ENCODE measurements at regions of chr14 and their contacts with region 1.

Region 1: GRCh38 chr14:102591889-102592763 is at the start of gene RCOR1:
- DNase-seq: peak; percentile 95
- H3K4me3 Mint-ChIP-seq: peak within 1 kb of the TSS; percentile 94
- H3K27ac Mint-ChIP-seq: peak within 1 kb of the TSS; percentile 96
- H3K4me1 Mint-ChIP-seq: peaks cover 18% of the 10 kb centered on the region
- H3K27me3 Mint-ChIP-seq: no peaks in the 10 kb centered on the region
- total RNA-seq, gene RCOR1: 23.9 and 25.2 TPM in 2 replicates

Region 2: GRCh38 chr14:101947906-101948665 is 644.0 kb before region 1 on chr14:
- intact Hi-C with region 1: loop called (anchors 2 kb)
- DNase-seq: peak; percentile 100
- H3K4me3 Mint-ChIP-seq: peak overlapping the region; percentile 97
- H3K27ac Mint-ChIP-seq: peak overlapping the region; percentile 97
- H3K4me1 Mint-ChIP-seq: peaks cover 12% of the 10 kb centered on the region
- H3K27me3 Mint-ChIP-seq: peaks cover 15% of the 10 kb centered on the region

Region 3: DNA sequence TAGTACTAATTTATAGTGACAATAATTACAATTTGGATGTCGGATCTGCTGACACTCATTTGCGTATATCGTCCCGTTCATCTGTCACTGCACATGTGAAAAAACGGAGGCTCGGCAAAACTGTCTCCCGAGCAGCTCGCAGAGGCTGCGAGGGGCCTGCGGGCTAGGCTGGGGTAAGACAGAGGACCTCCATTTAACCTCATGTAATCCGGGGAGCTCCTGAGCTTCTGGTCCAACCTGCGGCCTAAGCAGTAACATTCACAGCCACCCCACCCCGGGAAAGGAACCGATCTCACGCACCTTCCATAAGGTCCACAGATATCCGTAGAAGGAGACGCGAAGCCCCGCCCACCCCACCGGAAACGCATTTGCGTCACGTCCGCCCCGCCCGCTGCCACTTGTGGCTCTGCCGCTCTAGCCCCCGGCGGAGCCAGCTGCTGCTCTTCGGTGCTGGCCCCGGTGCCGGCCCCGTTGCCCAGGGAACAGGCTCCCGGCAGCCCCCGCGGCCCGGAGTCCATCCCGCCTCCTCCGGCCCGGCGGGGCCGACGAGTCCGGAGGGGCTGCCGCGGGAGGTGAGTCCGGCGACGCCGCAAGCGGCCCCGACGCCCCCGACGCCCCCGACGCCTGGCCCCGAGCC is 229.5 kb before region 1 on chr14 and contains the starts of genes CINP and TECPR2:
- intact Hi-C with region 1: loop called (anchors 2 kb)
- DNase-seq: peak; percentile 92
- H3K4me3 Mint-ChIP-seq: peak within 1 kb of the TSS; percentile 93
- H3K27ac Mint-ChIP-seq: peak within 1 kb of the TSS; percentile 91
- H3K4me1 Mint-ChIP-seq: peaks cover 32% of the 10 kb centered on the region
- H3K27me3 Mint-ChIP-seq: no peaks in the 10 kb centered on the region
- total RNA-seq, gene CINP: 39.6 and 42.5 TPM in 2 replicates
- total RNA-seq, gene TECPR2: 9.5 and 10.1 TPM in 2 replicates

Region 4: GRCh38 chr14:102524466-102525218 is 67.5 kb before region 1 on chr14:
- intact Hi-C with region 1: loop called (anchors 1 kb)
- DNase-seq: peak; percentile 94
- H3K4me3 Mint-ChIP-seq: peak overlapping the region; percentile 92
- H3K27ac Mint-ChIP-seq: peak overlapping the region; percentile 88
- H3K4me1 Mint-ChIP-seq: peaks cover 27% of the 10 kb centered on the region
- H3K27me3 Mint-ChIP-seq: peaks cover 7% of the 10 kb centered on the region

Region 5: DNA sequence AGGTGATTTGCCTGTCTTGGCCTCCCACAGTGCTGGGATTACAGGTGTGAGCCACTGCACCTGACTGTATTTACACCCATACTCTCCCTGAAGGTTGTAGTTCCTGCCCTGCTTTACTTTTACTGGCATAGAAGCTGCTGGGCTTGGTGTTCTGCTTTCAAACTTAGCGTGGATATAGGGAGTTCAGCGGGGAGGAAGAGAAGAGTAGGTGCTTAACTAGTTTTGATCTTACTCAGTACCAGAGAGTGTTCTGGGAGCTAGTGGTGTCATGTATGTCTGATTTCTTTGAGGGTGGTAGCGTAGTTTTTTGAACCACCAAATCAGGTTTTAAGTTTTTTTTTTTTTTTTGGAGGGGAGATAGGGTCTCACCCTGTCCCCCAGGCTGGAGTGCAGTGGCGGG is 14.2 kb after region 1 on chr14:
- intact Hi-C with region 1: loop called (anchors 2 kb)
- DNase-seq: no peak
- H3K4me3 Mint-ChIP-seq: no peak overlapping the region
- H3K27ac Mint-ChIP-seq: peak overlapping the region; percentile 31
- H3K4me1 Mint-ChIP-seq: peaks cover 31% of the 10 kb centered on the region
- H3K27me3 Mint-ChIP-seq: no peaks in the 10 kb centered on the region

Region 6: GRCh38 chr14:102900631-102901571 is 308.8 kb after region 1 on chr14:
- intact Hi-C with region 1: no loop called
- DNase-seq: no peak
- H3K4me3 Mint-ChIP-seq: no peak overlapping the region
- H3K27ac Mint-ChIP-seq: peak overlapping the region; percentile 72
- H3K4me1 Mint-ChIP-seq: peaks cover 23% of the 10 kb centered on the region
- H3K27me3 Mint-ChIP-seq: no peaks in the 10 kb centered on the region

Region 7: DNA sequence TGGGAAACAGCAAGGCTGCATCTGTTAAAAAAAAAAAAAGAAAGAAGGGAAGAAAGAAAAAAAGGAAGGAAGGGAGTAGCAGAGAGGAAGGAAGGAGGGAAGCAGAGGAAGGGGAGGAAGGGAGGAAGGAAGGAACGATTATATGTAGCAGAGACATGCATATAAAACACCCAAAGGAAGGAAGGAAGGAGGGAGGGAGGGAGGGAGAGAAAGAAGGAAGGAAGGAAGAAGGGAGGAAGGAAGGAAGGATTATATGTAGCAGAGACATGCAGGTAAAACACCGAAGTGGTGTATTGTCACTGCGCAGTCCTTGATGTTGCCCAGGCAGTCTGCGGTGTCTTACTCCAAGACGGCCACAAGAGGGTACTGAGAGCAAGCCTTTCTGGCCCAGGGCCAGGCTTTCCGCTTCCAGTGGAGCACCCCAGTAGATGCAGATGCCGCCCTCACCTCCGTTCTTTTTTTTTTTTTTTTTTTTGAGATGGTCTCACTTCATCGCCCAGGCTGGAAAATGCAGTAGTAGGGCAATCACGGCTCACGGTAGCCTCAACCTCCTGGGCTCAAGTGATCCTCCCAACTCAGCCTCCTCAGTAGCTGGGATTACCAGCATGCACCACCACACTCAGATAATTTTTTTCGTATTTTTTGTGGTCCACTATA is 486.1 kb after region 1 on chr14:
- intact Hi-C with region 1: loop called (anchors 1 kb)
- DNase-seq: peak; percentile 54
- H3K4me3 Mint-ChIP-seq: no peak overlapping the region
- H3K27ac Mint-ChIP-seq: no peak overlapping the region
- H3K4me1 Mint-ChIP-seq: no peaks in the 10 kb centered on the region
- H3K27me3 Mint-ChIP-seq: peaks cover 7% of the 10 kb centered on the region

Measured in activated T-helper 1 cell treated with anti-CD3 and anti-CD28 coated beads, Interleukin-12 subunit alpha, Interleukin-12 subunit beta, Interleukin-2, Interleukin-4 antibody, amounts not matched to agents 30 ng/mL and 10 ng/mL and 1 ng/mL, durations not matched to agents 14 hours and 24 hours and 36 hours (primary cell).